ENCODE measurements at regions of chr16 and their contacts with region 1.

Region 1: DNA sequence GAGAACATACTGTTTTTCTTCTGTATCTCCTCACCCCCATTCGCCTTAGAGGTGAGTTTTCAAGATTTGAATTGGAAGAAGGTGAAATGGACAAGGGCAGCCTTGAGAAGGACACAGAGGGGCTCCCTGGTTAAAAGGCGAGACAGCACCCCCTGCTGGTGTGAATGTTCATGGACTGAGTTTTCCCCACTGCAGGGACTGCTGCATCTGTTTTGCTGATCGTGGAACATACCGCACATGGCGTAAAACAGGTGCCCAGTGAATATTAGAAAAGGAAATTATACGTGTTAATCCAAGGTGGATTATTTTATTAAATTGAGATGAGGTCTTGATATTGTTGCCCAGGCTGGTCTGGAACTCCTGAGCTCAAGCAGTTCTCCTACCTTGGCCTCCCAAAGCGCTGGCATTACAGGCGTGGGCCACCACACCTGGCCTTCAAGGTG is 54.5 kb downstream of the NDE1 start:
- DNase-seq: peak; percentile 76 to 83 (median 78)
- H3K4me3 ChIP-seq: no peak overlapping the region
- H3K27ac ChIP-seq: no peak overlapping the region
- H3K4me1 ChIP-seq: peaks cover 0 to 31% (median 14%) of the 10 kb centered on the region in 4 experiments
- H3K27me3 ChIP-seq: no peaks in the 10 kb centered on the region

Region 2: DNA sequence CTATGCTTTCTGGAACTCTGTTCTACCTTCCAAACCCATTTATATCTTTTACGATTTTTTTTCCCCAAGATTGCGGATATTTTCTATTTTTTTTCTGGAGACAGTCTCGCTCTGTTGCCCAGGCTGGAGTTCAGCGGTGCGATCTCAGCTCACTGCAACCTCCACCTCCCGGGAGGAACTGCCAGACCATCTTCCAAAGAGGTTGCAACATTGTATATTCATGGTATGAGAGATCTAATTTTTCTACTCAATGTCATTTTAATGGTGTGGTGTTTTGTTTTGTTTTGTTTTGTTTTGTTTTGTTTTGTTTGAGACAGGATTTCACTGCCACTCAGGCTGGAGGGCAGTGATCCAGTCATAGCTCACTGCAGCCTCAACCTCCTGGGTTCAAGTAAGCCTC is 278.7 kb before region 1 on chr16:
- CTCF ChIA-PET with region 1: interaction called, 12 read pairs
- POLR2A ChIA-PET with region 1: no interaction called
- DNase-seq: no peak
- H3K4me3 ChIP-seq: no peak overlapping the region
- H3K27ac ChIP-seq: no peak overlapping the region
- H3K4me1 ChIP-seq: peaks cover 0 to 1% (median 0%) of the 10 kb centered on the region in 4 experiments
- H3K27me3 ChIP-seq: peaks cover 0 to 2% (median 0%) of the 10 kb centered on the region in 5 experiments

Region 3: DNA sequence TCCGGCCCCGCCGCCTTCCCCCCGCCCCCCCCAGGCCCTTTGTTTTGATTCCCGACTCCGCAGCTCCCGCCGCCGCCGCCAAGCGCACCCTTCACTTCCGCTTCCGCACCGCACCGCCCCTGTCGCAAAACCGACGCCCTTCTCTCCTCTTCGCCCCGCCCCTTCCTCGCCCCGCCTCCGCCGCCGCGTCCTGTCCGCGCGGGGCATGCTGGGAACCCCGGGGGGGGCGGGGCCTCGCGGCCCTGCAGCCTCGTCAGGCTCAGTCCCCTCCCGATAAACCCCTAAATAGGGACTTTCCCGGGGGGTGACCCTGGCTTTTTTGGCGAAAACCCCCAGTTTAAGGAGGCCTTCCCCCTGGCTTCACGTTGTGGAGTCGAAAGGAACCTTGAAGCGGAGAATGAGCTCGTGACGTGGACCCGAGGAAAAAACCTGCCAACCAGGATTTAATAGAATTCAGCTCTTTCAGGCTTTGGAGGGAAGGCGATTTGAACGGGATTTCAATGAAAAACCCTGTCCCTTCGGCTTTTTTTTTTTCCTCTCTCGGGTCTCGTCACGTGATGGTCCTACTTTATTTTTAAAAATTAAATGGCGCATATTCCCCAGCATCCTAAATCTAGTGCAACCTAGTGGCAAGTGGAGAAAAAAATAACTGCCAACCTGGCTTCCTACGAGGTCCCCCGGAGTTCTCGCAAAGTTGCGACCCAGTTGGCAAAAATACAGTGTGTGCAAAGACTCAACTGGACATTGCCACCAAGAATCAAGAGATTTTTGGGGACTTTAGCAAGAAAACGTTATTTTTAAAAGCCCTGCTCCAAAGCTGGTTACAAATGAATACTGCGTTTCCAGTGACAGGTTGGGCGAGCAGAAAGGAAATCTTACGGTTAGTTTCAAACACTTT is 61.3 kb before region 1 on chr16 and contains the start of gene MARF1:
- CTCF ChIA-PET with region 1: interaction called, 13 read pairs
- POLR2A ChIA-PET with region 1: no interaction called
- DNase-seq: peak; percentile 95 to 98 (median 98)
- H3K4me3 ChIP-seq: peak within 1 kb of the TSS; percentile 58 to 98 (median 90)
- H3K27ac ChIP-seq: peak within 1 kb of the TSS; percentile 99 to 100
- H3K4me1 ChIP-seq: peaks cover 23 to 37% (median 28%) of the 10 kb centered on the region in 4 experiments
- H3K27me3 ChIP-seq: no peaks in the 10 kb centered on the region

Region 4: DNA sequence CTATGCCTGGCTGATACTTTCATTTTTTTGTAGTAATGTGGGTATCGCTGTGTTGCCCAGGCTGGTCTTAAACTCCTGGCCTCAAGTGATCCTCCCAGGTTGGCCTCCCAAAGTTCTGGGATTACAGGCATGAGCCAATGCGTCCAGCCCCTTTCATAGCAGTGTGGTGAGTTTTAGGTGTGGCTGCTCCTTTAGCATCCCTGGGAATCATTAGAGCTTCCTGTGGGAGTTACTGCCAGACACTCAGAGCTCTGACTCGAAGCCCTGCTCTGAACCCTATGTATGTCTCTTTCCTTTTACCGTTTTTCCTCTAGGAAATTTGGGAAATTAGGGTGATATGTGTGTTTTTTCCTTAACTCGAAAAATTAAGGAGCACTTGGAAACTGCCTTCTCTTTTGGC is 10.1 kb before region 1 on chr16:
- CTCF ChIA-PET with region 1: interaction called, 18 read pairs
- POLR2A ChIA-PET with region 1: no interaction called
- DNase-seq: no peak
- H3K4me3 ChIP-seq: no peak overlapping the region
- H3K27ac ChIP-seq: no peak overlapping the region
- H3K4me1 ChIP-seq: no peaks in the 10 kb centered on the region
- H3K27me3 ChIP-seq: no peaks in the 10 kb centered on the region

Region 5: GRCh38 chr16:15739950-15740349 is 35.4 kb after region 1 on chr16:
- CTCF ChIA-PET with region 1: no interaction called
- POLR2A ChIA-PET with region 1: no interaction called
- DNase-seq: no peak
- H3K4me3 ChIP-seq: no peak overlapping the region
- H3K27ac ChIP-seq: no peak overlapping the region
- H3K4me1 ChIP-seq: peaks cover 0 to 4% (median 2%) of the 10 kb centered on the region in 4 experiments
- H3K27me3 ChIP-seq: no peaks in the 10 kb centered on the region

Region 6: GRCh38 chr16:15749985-15750384 is 45.4 kb after region 1 on chr16:
- CTCF ChIA-PET with region 1: no interaction called
- POLR2A ChIA-PET with region 1: no interaction called
- DNase-seq: no peak
- H3K4me3 ChIP-seq: no peak overlapping the region
- H3K27ac ChIP-seq: no peak overlapping the region
- H3K4me1 ChIP-seq: peaks cover 0 to 2% (median 0%) of the 10 kb centered on the region in 4 experiments
- H3K27me3 ChIP-seq: no peaks in the 10 kb centered on the region

Measured in common myeloid progenitor, CD34-positive (primary cell).